ENCODE measurements at regions of chr2 and their contacts with region 1.

Region 1: GRCh38 chr2:230798769-230799399 is 65.9 kb upstream of the ITM2C start:
- DNase-seq: peak; percentile 47
- CTCF ChIP-seq: peak; percentile 45

Region 2: DNA sequence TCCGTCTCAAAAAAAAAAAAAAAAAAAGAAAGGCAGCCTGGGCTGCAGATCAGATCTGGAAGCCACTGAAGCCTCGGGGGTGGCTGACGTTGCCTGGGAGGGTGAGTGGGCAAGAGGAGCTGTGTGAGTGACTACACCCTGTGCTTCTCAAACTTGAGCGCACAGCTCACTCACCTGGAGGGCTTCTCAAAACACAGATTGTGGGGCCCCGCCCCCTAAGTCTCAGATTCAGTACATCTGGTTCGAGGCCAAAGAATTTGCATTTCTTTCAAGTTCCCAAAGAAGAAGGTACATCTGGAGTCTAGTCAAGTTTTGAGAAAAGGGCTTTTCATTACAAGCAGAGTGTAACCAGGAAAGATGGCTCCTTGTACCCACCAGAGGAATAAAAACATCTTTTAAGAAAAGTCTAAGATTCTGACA is 184.0 kb before region 1 on chr2:
- CTCF ChIA-PET with region 1: interaction called, 13 read pairs
- POLR2A ChIA-PET with region 1: interaction called, 7 read pairs
- DNase-seq: peak; percentile 75
- CTCF ChIP-seq: no peak

Region 3: GRCh38 chr2:230712443-230713330 is 86.2 kb before region 1 on chr2 and contains the start of gene CAB39:
- CTCF ChIA-PET with region 1: interaction called, 12 read pairs
- POLR2A ChIA-PET with region 1: no interaction called
- DNase-seq: peak; percentile 95
- CTCF ChIP-seq: peak; percentile 95

Region 4: DNA sequence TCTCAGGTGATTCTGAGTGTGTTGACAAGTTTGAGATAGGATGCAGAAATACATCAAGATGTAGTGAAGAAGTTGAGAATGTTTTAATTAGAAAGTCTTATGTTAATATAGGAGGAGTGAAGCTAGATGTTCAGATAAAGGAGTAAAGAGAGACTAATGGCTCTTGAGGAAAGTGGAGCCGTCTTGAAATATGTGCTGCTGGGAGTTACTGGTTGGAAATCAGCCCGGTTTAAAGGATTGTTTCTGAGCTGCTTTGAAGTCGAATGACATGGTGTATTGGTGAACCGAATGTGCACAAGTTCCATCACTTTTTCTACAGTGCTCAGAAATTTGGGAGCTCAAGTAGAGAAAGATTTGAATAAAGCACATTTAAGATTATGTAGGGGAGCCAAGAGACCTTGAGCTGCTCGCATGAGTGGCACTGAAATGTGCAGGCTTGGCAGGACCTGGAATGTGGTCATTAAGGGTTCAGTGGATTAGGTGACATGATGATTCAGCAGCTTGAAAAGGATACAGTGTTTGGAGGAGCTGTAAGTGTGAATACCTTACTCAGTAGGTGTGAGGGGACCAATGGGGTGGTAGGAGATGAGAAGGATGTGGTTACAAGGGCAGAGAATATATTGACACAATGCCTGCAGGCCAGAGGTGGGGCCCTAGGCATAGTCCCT is 17.6 kb before region 1 on chr2:
- CTCF ChIA-PET with region 1: interaction called, 52 read pairs
- POLR2A ChIA-PET with region 1: no interaction called
- DNase-seq: no peak
- CTCF ChIP-seq: no peak

Region 5: GRCh38 chr2:230814616-230815015 is 15.7 kb after region 1 on chr2:
- CTCF ChIA-PET with region 1: interaction called, 13 read pairs
- POLR2A ChIA-PET with region 1: no interaction called
- DNase-seq: peak; percentile 42
- CTCF ChIP-seq: peak; percentile 28

Region 6: DNA sequence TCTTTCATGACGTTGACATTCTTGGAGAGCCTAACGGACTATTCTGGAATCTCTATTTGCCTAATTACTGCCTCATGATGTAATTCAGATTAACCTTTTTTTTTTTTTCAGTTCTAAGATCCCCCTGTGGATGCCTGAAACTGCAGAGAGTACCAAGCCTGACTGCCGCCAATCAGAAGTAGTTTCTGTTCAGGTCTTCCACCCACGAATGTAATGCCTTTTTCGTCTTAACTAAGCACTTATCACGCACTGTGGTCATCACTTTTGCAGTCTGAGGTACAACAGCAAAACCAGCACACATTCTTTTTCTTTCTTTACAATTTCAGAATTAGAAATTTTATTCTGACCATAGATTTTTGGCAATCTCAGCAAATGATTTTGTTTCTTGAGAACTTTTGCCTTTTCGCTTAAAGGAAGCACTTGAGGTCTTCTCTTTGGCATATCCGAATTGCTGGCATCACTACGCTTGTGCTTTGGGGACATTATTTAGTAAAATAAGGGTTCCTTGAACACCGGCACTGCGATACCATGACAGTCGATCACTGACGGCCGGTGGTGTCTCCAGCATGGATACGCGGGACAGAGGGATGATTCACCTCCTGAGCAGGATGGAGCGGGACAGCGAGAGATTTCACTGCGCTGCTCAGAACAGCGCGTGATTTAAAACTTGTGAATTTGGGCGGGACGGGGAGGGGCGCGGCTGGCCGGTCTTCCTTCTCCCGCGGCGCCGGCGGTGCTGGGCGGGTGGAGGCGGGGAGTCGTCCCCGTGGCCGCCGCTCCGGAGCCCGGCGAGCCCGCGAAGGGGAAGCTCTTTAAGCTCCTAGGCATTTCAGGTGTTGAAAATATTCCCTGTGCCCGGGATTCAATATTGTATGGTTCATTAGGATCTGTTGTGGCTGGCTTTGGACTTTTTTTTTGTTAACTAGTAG is 158.2 kb after region 1 on chr2:
- CTCF ChIA-PET with region 1: no interaction called
- POLR2A ChIA-PET with region 1: no interaction called
- DNase-seq: peak; percentile 68
- CTCF ChIP-seq: no peak